ENCODE measurements at regions of chr15 and their contacts with region 1.

Region 1: GRCh38 chr15:71743861-71744382 is 66.4 kb upstream of the NR2E3 start:
- DNase-seq: no peak
- H3K4me3 ChIP-seq: no peak overlapping the region
- H3K27ac ChIP-seq: no peak overlapping the region
- H3K27me3 ChIP-seq: no peaks in the 10 kb centered on the region
- CTCF ChIP-seq: peak; percentile 72

Region 2: DNA sequence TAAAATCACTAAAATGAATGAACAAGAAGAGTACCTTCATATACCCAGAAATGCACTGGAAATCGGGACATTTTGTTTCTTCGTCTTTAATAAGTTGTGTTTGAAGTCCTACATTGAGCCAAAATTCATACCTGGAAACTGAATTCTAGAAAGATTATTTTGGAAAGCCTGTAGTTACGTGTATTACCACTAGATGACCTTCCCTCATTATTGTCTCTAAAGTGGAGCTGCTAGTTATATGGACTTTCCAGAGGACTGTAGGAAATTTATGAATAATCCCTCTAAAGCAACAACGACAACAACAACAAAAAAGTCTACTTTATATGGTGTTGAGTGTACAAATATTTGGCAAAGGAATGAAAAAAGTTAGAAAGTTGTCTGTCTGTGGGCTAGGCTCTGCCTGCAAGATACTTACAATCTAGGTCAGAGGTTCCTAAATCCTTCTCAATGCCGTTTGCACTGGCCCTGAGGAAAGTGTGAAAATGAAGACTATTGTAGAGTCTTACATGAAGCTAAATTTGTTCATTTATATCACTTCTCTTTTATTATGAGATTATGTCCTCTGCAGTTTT is 168.4 kb before region 1 on chr15:
- CTCF ChIA-PET with region 1: interaction called, 19 read pairs
- POLR2A ChIA-PET with region 1: no interaction called
- DNase-seq: no peak
- H3K4me3 ChIP-seq: no peak overlapping the region
- H3K27ac ChIP-seq: no peak overlapping the region
- H3K27me3 ChIP-seq: no peaks in the 10 kb centered on the region
- CTCF ChIP-seq: peak; percentile 61

Region 3: DNA sequence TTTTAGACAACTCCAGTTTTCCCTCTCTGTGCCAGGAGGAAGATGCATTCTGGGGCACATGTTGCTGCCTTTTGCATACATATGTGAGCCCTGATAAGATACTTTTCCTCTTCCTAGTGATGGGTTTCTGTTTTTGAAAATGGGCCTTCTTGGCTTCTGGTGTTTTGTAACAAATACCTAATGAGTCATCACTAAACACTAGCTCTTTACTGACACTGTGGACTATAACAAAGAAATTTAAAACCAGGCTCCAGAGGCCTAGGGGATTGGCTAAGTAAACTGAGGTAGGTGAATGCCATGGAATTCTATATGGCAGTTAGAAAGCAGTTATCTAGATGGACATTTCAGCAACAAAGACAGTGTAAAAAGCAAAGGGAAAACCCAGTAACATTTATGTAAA is 26.9 kb before region 1 on chr15:
- CTCF ChIA-PET with region 1: interaction called, 12 read pairs
- POLR2A ChIA-PET with region 1: no interaction called
- DNase-seq: no peak
- H3K4me3 ChIP-seq: no peak overlapping the region
- H3K27ac ChIP-seq: peak overlapping the region; percentile 48
- H3K27me3 ChIP-seq: no peaks in the 10 kb centered on the region
- CTCF ChIP-seq: no peak

Region 4: DNA sequence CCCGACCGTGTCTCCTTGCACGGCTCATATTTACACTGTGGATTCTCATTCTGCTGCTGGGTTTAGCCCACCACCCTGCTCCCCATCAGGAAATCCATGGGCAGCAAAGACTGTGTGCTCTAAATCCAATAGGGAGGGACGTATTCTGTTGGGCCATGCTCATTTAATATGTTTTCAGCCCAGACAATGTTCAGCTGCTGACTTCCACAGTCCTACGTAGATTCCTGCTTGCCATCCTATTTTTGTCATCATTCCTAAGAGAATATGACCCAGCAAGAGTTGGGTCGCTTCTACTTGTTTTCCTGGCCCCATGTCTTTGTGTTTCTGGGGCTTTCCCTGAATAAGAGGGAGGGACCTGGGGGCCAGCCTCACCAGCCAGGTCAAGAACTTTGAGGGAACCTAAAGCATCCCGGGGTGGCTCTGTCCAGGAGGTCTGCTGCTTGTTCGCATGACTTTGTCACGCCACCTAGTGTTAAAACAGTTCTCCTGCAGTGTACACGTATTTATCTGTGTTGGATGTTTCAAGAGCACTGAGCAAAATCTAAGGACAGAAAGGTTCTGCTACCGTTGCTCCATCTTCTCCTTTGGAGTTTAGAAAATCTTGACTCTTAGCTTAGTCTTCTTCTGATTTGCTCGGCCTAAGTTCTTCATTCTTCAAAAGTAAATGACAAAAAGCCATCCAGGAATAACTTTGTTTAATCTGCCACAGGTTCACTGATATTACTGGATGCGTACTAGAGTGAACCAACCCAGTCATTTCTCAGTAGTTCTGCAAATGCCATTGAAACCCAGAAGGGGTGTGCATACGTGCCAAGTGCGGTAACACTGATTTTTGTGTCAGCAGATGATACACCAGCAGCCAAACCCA is 13.4 kb before region 1 on chr15:
- CTCF ChIA-PET with region 1: interaction called, 20 read pairs
- POLR2A ChIA-PET with region 1: no interaction called
- DNase-seq: peak; percentile 44
- H3K4me3 ChIP-seq: no peak overlapping the region
- H3K27ac ChIP-seq: no peak overlapping the region
- H3K27me3 ChIP-seq: no peaks in the 10 kb centered on the region
- CTCF ChIP-seq: peak; percentile 81

Region 5: GRCh38 chr15:71780115-71780976 is 36.4 kb after region 1 on chr15:
- CTCF ChIA-PET with region 1: interaction called, 24 read pairs
- POLR2A ChIA-PET with region 1: no interaction called
- DNase-seq: no peak
- H3K4me3 ChIP-seq: no peak overlapping the region
- H3K27ac ChIP-seq: no peak overlapping the region
- H3K27me3 ChIP-seq: no peaks in the 10 kb centered on the region
- CTCF ChIP-seq: peak; percentile 82

Region 6: DNA sequence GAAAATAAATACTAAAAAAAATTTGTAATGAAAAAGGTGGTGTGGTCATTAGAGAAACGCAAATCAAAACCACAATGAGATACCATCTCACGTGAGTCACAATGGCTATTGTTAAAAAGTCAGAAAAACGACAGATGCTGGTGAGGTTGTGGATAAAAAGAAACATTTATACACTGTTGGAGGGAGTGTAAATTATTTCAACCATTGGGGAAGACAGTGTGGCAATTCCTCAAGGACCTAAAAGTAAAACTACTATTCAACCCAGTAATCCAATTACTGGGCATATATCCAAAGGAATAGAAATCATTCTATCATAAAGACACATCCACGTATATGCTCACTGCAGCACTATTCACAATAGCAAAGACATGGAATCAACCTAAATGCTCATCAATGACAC is 253.8 kb after region 1 on chr15:
- CTCF ChIA-PET with region 1: interaction called, 10 read pairs
- POLR2A ChIA-PET with region 1: no interaction called
- DNase-seq: no peak
- H3K4me3 ChIP-seq: no peak overlapping the region
- H3K27ac ChIP-seq: no peak overlapping the region
- H3K27me3 ChIP-seq: no peaks in the 10 kb centered on the region
- CTCF ChIP-seq: no peak